Sigmoid colon (tissue), 7 donors: ENCODE measurements at regions of chr7 and their contacts with region 1.

Region 1: DNA sequence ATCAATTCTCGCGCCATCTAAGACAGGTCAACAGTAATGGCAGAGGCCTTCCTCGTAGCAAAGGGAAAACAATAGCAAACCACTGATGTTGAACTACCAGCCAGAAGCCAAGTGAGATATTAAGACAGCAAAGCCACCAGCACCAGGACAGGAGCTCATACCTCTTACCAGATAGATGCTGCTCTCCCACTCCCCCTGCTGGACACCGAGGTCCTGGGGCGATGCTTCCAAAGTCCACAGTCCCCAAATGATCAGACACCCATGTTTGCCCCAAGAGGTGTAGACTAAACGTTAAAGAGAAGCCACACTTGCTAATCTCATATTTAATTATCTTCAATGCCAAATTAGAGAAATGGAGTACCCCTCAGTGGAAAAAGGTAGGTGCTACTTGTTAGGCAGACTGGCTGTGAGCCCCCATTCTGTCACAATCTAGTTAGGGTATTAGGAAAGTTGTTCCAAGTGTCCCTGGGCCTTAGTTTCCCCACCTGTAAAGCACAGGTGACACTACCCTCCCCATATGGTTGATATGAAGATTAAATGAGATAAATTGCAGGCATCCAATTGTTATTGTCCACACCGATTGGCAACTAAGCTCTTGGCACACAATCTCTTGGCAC is 39.9 kb downstream of the TOMM7 start:
- DNase-seq: peak; percentile 77
- H3K4me3 ChIP-seq: no peak overlapping the region
- H3K27ac ChIP-seq: no peak overlapping the region
- H3K4me1 ChIP-seq: peaks cover 0 to 3% (median 0%) of the 10 kb centered on the region in 4 donors
- H3K27me3 ChIP-seq: no peaks in the 10 kb centered on the region
- CTCF ChIP-seq: peak in 3 of 4 experiments; percentile 14 to 72 (median 53)
- EP300 ChIP-seq: no peak
- POLR2A ChIP-seq: no peak

Region 2: GRCh38 chr7:23055582-23056178 is 273.0 kb after region 1 on chr7:
- intact Hi-C with region 1: loop called (anchors 10 kb)
- DNase-seq: no peak
- H3K4me3 ChIP-seq: no peak overlapping the region
- H3K27ac ChIP-seq: no peak overlapping the region
- H3K4me1 ChIP-seq: peaks cover 0 to 4% (median 0%) of the 10 kb centered on the region in 4 donors
- H3K27me3 ChIP-seq: no peaks in the 10 kb centered on the region
- CTCF ChIP-seq: peak; percentile 52 to 85 (median 72)
- EP300 ChIP-seq: no peak
- POLR2A ChIP-seq: no peak